ENCODE measurements at regions of chr5 and their contacts with region 1.

Region 1: GRCh38 chr5:42811591-42812446 is at the start of gene SELENOP:
- DNase-seq: peak; percentile 99
- ATAC-seq: peak; percentile 84
- H3K4me3 ChIP-seq: peak within 1 kb of the TSS; percentile 72 to 100 (median 84)
- H3K27ac ChIP-seq: peak within 1 kb of the TSS; percentile 96
- H3K4me1 ChIP-seq: peaks cover 52% of the 10 kb centered on the region
- H3K27me3 ChIP-seq: peaks cover 0 to 5% of the 10 kb centered on the region in 2 experiments; a peak in 1 of 5 replicates
- CTCF ChIP-seq: no peak
- EP300 ChIP-seq: peak; percentile 84 to 96
- POLR2A ChIP-seq: peak; percentile 98 to 100
- RAD21 ChIP-seq: no peak
- total RNA-seq, gene SELENOP: 1,596 and 1,895 TPM in 2 replicates

Region 2: DNA sequence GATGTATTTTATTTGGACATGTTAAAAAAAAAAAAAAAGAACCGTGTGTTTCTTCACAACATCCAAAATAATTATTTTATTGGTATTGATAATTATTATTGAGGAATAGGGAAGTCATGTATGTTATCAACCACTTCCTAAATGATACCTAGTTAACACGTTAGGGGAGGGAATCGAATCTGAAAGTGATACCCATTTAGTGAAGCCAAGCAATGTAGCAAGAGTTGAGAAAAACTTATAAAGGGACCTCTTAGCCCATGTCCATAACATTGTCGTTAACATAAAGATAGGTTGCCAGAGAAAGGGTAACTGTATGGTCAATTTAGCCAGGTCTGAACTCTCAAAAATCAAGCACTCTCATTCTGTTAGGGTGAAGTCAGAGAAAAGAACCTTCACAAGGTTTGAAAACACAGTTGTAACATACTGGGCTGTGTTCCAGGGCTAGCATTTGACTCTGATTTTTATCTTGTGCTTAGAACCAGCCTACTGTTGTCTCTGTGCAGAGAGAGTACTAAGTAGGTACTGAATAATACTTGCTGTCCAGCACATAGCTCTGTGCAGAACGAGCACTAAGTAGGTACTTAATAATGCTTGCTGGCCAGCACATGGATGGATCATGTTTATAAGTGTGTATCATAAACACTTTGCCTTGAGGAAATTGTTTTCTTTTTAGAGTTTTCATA is 328.2 kb before region 1 on chr5:
- CTCF ChIA-PET with region 1: no interaction called
- POLR2A ChIA-PET with region 1: no interaction called
- in situ Hi-C with region 1: no loop called
- intact Hi-C with region 1: no loop called
- DNase-seq: no peak
- ATAC-seq: no peak
- H3K4me3 ChIP-seq: no peak overlapping the region
- H3K27ac ChIP-seq: no peak overlapping the region
- H3K4me1 ChIP-seq: no peaks in the 10 kb centered on the region
- H3K27me3 ChIP-seq: no peaks in the 10 kb centered on the region
- CTCF ChIP-seq: no peak
- EP300 ChIP-seq: no peak
- POLR2A ChIP-seq: no peak
- RAD21 ChIP-seq: no peak

Region 3: DNA sequence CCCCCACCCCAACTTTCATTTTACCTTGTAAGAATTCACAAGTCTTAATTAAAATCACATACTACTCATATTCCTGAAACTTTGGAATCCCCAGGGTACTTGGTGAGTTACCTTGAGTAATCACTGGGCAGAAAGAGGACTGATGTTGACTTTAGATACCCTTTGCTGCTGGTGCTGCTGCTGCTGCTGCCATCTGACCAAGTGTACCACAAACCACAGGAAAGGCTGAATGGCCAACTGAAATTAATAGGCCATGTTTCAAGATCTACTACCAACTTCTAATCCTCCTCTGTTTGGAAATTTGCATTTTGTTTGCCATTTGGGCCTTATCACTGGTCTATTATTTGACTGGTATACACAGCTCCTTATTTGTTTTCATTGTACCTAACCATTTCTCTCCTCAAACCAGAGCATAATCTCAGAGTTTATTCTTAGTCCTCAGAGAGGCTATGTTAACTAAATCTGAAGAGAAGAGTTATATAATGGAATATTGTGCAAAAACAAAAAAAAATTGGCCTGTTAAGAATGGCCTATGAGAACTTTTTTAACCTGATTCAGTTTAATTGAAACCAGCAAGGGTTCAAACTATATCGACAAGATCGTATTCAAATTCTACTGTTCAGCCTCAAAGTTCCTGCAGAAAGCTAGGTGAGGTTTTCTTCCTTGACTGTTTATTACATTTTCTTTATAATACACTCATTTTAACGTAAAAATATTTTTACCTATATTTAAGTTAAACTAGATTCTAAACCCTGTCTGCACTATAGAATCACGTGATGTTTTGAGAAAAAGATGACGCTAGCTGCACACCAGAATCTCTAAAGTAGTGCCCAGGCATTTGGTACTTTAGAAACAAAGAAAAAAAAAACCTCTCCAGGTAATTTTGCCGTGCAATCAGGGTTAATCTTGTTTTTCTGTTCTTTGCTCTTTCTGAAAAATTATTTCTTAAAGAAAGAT is 13.3 kb before region 1 on chr5:
- CTCF ChIA-PET with region 1: no interaction called
- POLR2A ChIA-PET with region 1: interaction called, 36 read pairs
- in situ Hi-C with region 1: no loop called
- intact Hi-C with region 1: no loop called
- DNase-seq: peak; percentile 28
- ATAC-seq: peak; percentile 70
- H3K4me3 ChIP-seq: no peak overlapping the region
- H3K27ac ChIP-seq: no peak overlapping the region
- H3K4me1 ChIP-seq: no peaks in the 10 kb centered on the region
- H3K27me3 ChIP-seq: no peaks in the 10 kb centered on the region
- CTCF ChIP-seq: no peak
- EP300 ChIP-seq: no peak
- POLR2A ChIP-seq: peak; percentile 31 to 44; a peak in 2 of 4 replicates
- RAD21 ChIP-seq: no peak

Region 4: DNA sequence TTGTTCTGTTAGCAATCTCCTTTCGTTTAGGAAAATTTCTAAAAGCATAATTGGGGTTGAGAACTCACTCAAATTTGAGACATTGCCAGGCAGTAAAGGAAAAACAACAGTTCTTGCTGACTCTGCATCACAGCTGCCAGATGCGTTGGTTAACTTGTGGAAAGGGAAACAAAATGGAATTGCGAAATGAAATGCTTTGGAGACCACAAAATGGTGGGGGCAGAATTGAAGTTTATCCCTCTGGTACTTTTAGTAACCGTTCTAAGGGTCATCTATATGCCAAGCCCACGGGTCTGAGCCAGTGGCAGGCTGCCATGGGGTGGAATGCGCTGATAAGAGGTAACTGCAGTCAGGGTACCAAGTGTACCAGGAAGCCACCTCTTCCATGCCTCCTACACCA is 28.4 kb after region 1 on chr5:
- CTCF ChIA-PET with region 1: no interaction called
- POLR2A ChIA-PET with region 1: interaction called, 18 read pairs
- in situ Hi-C with region 1: no loop called
- intact Hi-C with region 1: no loop called
- DNase-seq: peak; percentile 38
- ATAC-seq: peak; percentile 60
- H3K4me3 ChIP-seq: peak overlapping the region in 1 of 3 experiments; percentile 17; a peak in 1 of 6 replicates
- H3K27ac ChIP-seq: peak overlapping the region; percentile 19
- H3K4me1 ChIP-seq: peaks cover 57% of the 10 kb centered on the region
- H3K27me3 ChIP-seq: no peaks in the 10 kb centered on the region
- CTCF ChIP-seq: no peak
- EP300 ChIP-seq: no peak
- POLR2A ChIP-seq: no peak
- RAD21 ChIP-seq: no peak

Region 5: DNA sequence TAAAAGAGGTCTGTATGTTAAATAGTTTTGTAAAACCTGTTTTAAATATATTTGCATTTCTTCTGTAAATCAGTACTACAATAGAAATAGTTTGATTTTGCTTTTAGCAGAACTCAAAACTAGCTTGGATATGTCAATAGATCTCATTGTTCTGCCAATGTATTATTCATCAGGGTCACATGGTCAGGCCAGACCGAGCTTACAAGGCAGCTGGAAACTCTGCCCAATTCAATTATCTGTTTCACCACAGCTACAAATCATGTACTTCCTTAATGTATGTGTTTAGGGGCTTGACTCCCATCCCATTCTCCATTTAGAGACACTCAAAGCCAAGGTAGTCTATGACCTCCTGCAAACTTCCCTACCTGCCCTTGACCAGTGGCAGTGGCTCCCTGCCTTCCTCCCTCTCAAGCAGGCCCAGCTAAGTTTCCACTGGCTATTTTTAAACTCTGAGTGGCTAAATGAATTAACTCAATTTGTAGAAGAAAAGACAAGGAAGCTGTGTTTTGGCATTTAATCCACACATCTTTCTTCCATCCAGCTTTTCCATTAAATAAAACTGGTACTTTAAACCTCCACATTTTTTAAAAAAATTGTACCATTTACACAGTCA is 46.3 kb after region 1 on chr5:
- CTCF ChIA-PET with region 1: no interaction called
- POLR2A ChIA-PET with region 1: interaction called, 82 read pairs
- in situ Hi-C with region 1: no loop called
- intact Hi-C with region 1: no loop called
- DNase-seq: no peak
- ATAC-seq: peak; percentile 60
- H3K4me3 ChIP-seq: peak overlapping the region in 2 of 3 experiments; percentile 22 to 51; a peak in 3 of 6 replicates
- H3K27ac ChIP-seq: peak overlapping the region; percentile 69
- H3K4me1 ChIP-seq: peaks cover 89% of the 10 kb centered on the region
- H3K27me3 ChIP-seq: no peaks in the 10 kb centered on the region
- CTCF ChIP-seq: no peak
- EP300 ChIP-seq: no peak
- POLR2A ChIP-seq: no peak
- RAD21 ChIP-seq: no peak

Region 6: GRCh38 chr5:42876375-42876844 is 64.6 kb after region 1 on chr5:
- CTCF ChIA-PET with region 1: no interaction called
- POLR2A ChIA-PET with region 1: interaction called, 263 read pairs
- in situ Hi-C with region 1: loop called (anchors 10 kb)
- intact Hi-C with region 1: loop called (anchors 1 kb)
- DNase-seq: no peak
- ATAC-seq: no peak
- H3K4me3 ChIP-seq: peak overlapping the region in 2 of 3 experiments; percentile 54 to 60; a peak in 3 of 6 replicates
- H3K27ac ChIP-seq: peak overlapping the region; percentile 99
- H3K4me1 ChIP-seq: peaks cover 97% of the 10 kb centered on the region
- H3K27me3 ChIP-seq: no peaks in the 10 kb centered on the region
- CTCF ChIP-seq: no peak
- EP300 ChIP-seq: no peak
- POLR2A ChIP-seq: no peak
- RAD21 ChIP-seq: no peak

Region 7: DNA sequence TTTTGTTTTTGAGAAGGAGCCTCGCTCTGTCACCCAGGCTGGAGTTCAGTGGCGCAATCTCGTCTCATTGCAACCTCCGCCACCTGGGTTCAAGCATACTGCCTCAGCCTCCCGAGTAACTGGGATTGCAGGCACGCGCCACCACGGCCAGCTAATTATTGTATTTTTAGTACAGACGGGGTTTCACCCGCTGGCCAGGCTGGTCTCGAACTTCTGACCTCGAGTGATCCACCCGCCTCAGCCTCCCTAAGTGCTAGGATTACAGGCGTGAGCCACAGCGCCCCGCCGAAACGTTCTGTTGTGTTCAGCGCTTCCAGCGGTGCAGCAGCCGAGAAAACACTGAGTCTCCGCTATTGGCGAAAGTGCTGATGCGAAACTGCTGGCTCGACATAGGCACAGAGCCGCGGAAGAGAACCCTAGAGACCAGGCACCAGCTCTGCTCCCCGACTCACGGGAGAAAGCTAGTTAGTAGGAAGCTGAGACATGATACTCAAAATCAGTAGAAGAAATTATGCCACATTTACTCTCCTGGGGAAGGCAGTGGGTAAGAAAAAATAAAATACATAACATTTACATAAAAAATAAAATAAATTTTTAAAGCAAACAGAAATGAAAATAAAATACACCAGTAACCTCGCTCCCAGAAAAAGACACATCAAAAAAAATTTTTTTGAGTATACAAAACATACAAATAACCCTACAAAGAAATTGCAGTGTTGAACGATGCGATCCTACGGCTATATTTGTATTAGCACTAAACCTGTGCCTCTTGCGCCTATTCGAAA is 196.7 kb after region 1 on chr5:
- CTCF ChIA-PET with region 1: no interaction called
- POLR2A ChIA-PET with region 1: interaction called, 6 read pairs
- in situ Hi-C with region 1: loop called (anchors 25 kb)
- intact Hi-C with region 1: loop called (anchors 10 kb)
- DNase-seq: peak; percentile 89
- ATAC-seq: peak; percentile 71
- H3K4me3 ChIP-seq: peak overlapping the region; percentile 73 to 94 (median 78)
- H3K27ac ChIP-seq: peak overlapping the region; percentile 84
- H3K4me1 ChIP-seq: peaks cover 12% of the 10 kb centered on the region
- H3K27me3 ChIP-seq: no peaks in the 10 kb centered on the region; a peak in 1 of 5 replicates
- CTCF ChIP-seq: peak; percentile 76
- EP300 ChIP-seq: peak in 1 of 2 experiments; percentile 53; a peak in 1 of 4 replicates
- POLR2A ChIP-seq: peak; percentile 45 to 60; a peak in 3 of 4 replicates
- RAD21 ChIP-seq: peak; percentile 14; the same call in 1 of the 2 replicates